Activated CD8-positive, alpha-beta memory T cell treated with anti-CD3 and anti-CD28 coated beads, Interleukin-2, amount 10 ng/mL, durations not matched to agents 7 days and 5 days (primary cell): ENCODE measurements at regions of chr15 and their contacts with region 1.

Region 1: GRCh38 chr15:63945007-63945788 is 101.1 kb downstream of the DAPK2 start:
- DNase-seq: peak; percentile 83
- ATAC-seq: peak; percentile 90
- H3K4me3 Mint-ChIP-seq: no peak overlapping the region
- H3K27ac Mint-ChIP-seq: no peak overlapping the region
- H3K4me1 Mint-ChIP-seq: peaks cover 18% of the 10 kb centered on the region
- H3K27me3 Mint-ChIP-seq: no peaks in the 10 kb centered on the region

Region 2: GRCh38 chr15:63891079-63891767 is 54.0 kb before region 1 on chr15:
- CTCF ChIA-PET with region 1: interaction called, 11 read pairs
- DNase-seq: peak; percentile 83
- ATAC-seq: peak; percentile 29
- H3K4me3 Mint-ChIP-seq: no peak overlapping the region
- H3K27ac Mint-ChIP-seq: peak overlapping the region; percentile 87
- H3K4me1 Mint-ChIP-seq: peaks cover 61% of the 10 kb centered on the region
- H3K27me3 Mint-ChIP-seq: no peaks in the 10 kb centered on the region

Region 3: GRCh38 chr15:63928185-63928842 is 16.9 kb before region 1 on chr15:
- CTCF ChIA-PET with region 1: interaction called, 21 read pairs
- DNase-seq: no peak
- ATAC-seq: no peak
- H3K4me3 Mint-ChIP-seq: no peak overlapping the region
- H3K27ac Mint-ChIP-seq: no peak overlapping the region
- H3K4me1 Mint-ChIP-seq: peaks cover 13% of the 10 kb centered on the region
- H3K27me3 Mint-ChIP-seq: no peaks in the 10 kb centered on the region

Region 4: DNA sequence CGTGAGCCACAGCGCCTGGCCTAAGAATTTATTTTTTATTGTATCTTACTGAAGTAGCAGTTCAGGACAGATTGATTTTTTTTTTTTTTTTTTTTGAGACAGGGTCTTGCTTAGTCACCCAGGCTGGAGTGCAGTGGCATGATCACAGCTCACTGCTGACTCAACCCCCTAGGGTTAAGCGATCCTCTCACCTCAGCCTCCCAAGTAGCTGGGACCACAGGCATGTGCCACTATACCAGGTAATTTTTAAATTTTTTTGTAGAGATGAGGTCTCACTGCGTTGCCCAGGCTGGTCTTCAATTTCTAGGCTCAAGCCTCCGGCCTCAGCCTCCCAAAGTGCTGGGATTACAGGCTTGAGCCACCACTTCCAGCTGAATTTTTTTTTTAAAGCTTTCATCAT is 11.7 kb before region 1 on chr15:
- CTCF ChIA-PET with region 1: interaction called, 21 read pairs
- DNase-seq: peak; percentile 65
- ATAC-seq: peak; percentile 72
- H3K4me3 Mint-ChIP-seq: no peak overlapping the region
- H3K27ac Mint-ChIP-seq: no peak overlapping the region
- H3K4me1 Mint-ChIP-seq: peaks cover 19% of the 10 kb centered on the region
- H3K27me3 Mint-ChIP-seq: no peaks in the 10 kb centered on the region

Region 5: GRCh38 chr15:63970621-63971426 is 25.6 kb after region 1 on chr15:
- CTCF ChIA-PET with region 1: interaction called, 53 read pairs
- DNase-seq: peak; percentile 66
- ATAC-seq: peak; percentile 71
- H3K4me3 Mint-ChIP-seq: peak overlapping the region; percentile 58
- H3K27ac Mint-ChIP-seq: peak overlapping the region; percentile 98
- H3K4me1 Mint-ChIP-seq: peaks cover 57% of the 10 kb centered on the region
- H3K27me3 Mint-ChIP-seq: no peaks in the 10 kb centered on the region

Region 6: DNA sequence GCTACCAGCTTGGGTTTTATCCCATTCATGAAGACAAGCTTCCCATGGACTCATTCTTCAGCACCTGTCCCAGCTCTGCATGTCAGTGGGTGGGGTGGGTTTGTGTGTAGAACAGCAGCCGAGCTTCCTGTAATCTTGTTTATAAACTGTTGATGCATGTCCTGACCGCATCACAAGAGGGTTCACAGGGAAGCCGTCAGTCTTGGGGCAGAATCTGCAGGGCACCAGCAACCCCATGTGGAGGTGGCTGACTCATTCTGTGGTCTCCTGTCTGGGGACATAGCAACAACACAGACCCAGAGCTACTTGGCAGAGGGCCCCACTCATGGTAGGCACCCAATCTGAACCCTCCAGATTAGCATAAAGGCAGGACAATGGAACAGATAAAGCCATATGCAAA is 65.5 kb after region 1 on chr15:
- CTCF ChIA-PET with region 1: interaction called, 27 read pairs
- DNase-seq: peak; percentile 96
- ATAC-seq: peak; percentile 94
- H3K4me3 Mint-ChIP-seq: peak overlapping the region; percentile 57
- H3K27ac Mint-ChIP-seq: peak overlapping the region; percentile 91
- H3K4me1 Mint-ChIP-seq: peaks cover 66% of the 10 kb centered on the region
- H3K27me3 Mint-ChIP-seq: no peaks in the 10 kb centered on the region